ENCODE measurements at regions of chr12 and their contacts with region 1.

Region 1: DNA sequence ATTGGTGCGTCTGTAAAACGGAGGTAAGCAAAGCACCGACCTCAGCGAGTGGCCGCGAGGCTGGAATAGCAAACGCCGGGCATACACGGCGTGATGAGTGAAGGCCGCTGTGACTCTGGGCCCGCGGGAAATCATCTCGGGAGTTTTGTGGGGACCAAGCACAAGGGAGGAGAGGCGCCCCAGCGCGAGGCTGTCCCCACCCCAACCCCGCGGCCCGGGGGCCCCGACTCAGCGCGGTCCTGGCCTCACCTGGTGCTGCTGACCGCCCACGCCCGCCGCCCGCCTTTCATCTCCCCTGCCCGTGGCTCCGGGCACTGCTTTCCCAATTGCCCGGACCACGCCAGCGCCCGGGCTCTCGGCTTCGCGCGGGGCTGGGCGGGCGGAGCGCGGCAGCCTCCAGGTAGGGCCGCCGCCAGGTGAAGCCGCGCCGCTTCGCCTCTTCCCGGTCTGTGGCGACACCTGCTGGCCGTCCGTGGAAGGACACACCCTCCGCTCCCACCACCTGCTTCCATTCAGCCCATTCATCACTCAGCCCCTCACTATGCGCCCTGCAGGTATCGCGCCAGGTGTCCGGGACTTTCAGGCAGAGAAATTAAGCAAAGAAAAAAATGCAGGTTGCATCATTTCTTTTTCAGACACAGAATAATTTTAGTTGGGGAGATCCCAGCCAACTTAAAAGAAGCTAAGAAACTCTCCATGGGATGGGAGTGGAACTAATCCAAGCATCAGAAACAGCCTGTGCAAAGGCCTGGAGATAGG is 360.4 kb downstream of the MED13L start:
- DNase-seq: peak; percentile 48 to 96 (median 83)
- ATAC-seq: peak; percentile 97 to 100 (median 99)
- H3K4me3 ChIP-seq: peak overlapping the region in 2 of 4 donors; percentile 26 to 32
- H3K27ac ChIP-seq: no peak overlapping the region
- H3K4me1 ChIP-seq: no peaks in the 10 kb centered on the region
- H3K27me3 ChIP-seq: peaks cover 0 to 3% (median 1%) of the 10 kb centered on the region in 4 donors
- CTCF ChIP-seq: peak; percentile 92 to 96 (median 96)

Region 2: GRCh38 chr12:114655934-114656749 is 1260.9 kb before region 1 on chr12:
- intact Hi-C with region 1: loop called in 1 of 3 experiments (anchors 10 kb)
- DNase-seq: no peak
- ATAC-seq: peak in 3 of 4 donors; percentile 42 to 61 (median 48)
- H3K4me3 ChIP-seq: no peak overlapping the region
- H3K27ac ChIP-seq: no peak overlapping the region
- H3K4me1 ChIP-seq: no peaks in the 10 kb centered on the region
- H3K27me3 ChIP-seq: no peaks in the 10 kb centered on the region
- CTCF ChIP-seq: no peak

Region 3: GRCh38 chr12:114668151-114668885 is 1248.8 kb before region 1 on chr12:
- intact Hi-C with region 1: loop called in 1 of 3 experiments (anchors 5 kb)
- DNase-seq: peak; percentile 63 to 90 (median 78)
- ATAC-seq: peak; percentile 92 to 97 (median 95)
- H3K4me3 ChIP-seq: peak overlapping the region in 1 of 4 donors; percentile 33
- H3K27ac ChIP-seq: no peak overlapping the region
- H3K4me1 ChIP-seq: peaks cover 0 to 3% (median 0%) of the 10 kb centered on the region in 3 donors
- H3K27me3 ChIP-seq: peaks cover 0 to 74% (median 18%) of the 10 kb centered on the region in 4 donors
- CTCF ChIP-seq: peak in 3 of 4 donors; percentile 13 to 45 (median 29)

Region 4: DNA sequence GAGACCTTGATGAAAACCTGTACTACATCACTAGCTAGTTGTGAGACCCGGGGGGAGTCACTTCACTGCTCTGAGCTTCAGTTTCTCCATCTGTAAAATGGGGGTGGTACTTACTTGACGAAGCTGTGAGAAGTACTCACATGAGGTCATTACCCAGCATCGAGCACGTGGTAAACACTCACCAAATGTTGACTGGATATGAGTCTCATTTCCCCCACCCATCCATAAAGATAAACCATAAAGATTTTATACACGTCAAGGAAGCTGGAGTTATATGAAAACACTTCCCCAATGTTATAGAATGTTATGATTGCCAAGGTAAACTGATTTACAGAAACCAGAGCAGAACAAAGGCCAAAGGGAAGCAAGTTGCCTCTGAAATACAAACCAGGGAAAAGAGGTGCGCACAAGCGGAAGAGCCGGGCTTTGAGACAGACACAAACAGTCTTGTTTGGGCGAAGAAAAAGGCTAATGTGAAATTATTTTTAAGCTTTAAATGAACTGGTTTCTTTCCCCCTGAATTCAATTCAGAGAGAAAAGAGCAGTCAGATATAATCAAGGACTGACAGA is 176.4 kb before region 1 on chr12:
- intact Hi-C with region 1: no loop called
- DNase-seq: no peak
- ATAC-seq: no peak
- H3K4me3 ChIP-seq: no peak overlapping the region
- H3K27ac ChIP-seq: no peak overlapping the region
- H3K4me1 ChIP-seq: no peaks in the 10 kb centered on the region
- H3K27me3 ChIP-seq: no peaks in the 10 kb centered on the region
- CTCF ChIP-seq: no peak